Heart right ventricle (tissue), 16 donors: ENCODE measurements at regions of chr1 and their contacts with region 1.

Region 1: GRCh38 chr1:54558434-54559030 is 10.5 kb downstream of the ACOT11 start:
- DNase-seq: no peak
- ATAC-seq: peak in 6 of 8 donors; percentile 6 to 58 (median 44)
- H3K4me3 ChIP-seq: peak overlapping the region in 1 of 10 donors; percentile 11
- H3K27ac ChIP-seq: peak overlapping the region; percentile 49 to 88 (median 78)
- H3K4me1 ChIP-seq: peaks cover 0 to 47% (median 21%) of the 10 kb centered on the region in 9 donors
- H3K27me3 ChIP-seq: no peaks in the 10 kb centered on the region
- CTCF ChIP-seq: no peak

Region 2: DNA sequence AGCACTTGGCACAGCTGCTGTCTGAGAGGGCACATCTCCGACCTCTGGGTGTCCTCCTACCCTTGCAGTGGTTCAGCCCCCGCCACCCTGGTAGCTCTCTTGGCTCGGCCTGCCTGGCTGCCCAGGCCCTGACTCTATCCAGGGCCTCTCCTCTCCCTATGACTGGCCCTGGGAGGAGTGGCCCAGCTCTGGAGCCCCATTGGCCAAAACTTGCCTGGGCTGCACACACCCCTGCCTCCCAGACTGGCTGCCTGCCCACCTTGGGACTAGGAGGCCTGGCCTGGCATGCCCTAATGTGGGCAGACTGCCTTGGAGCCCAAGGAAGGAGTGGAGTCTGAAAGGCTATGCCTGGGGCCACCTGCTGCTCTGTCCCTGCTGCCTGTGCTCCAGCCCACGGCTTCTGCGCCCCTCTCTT is 23.1 kb after region 1 on chr1:
- intact Hi-C with region 1: loop called in 1 of 10 experiments (anchors 1 kb)
- DNase-seq: peak; percentile 89 to 90
- ATAC-seq: peak; percentile 76 to 92 (median 84)
- H3K4me3 ChIP-seq: no peak overlapping the region
- H3K27ac ChIP-seq: peak overlapping the region; percentile 68 to 93 (median 88)
- H3K4me1 ChIP-seq: peaks cover 19 to 91% (median 68%) of the 10 kb centered on the region in 9 donors
- H3K27me3 ChIP-seq: no peaks in the 10 kb centered on the region
- CTCF ChIP-seq: peak in 1 of 9 donors; percentile 7